ENCODE measurements at regions of chr11 and their contacts with region 1.

Region 1: GRCh38 chr11:26519469-26519868 is 52.6 kb downstream of the MUC15 start:
- DNase-seq: no peak
- ATAC-seq: no peak
- H3K4me3 Mint-ChIP-seq: no peak overlapping the region
- H3K27ac Mint-ChIP-seq: no peak overlapping the region
- H3K4me1 Mint-ChIP-seq: no peaks in the 10 kb centered on the region
- H3K27me3 Mint-ChIP-seq: no peaks in the 10 kb centered on the region

Region 2: DNA sequence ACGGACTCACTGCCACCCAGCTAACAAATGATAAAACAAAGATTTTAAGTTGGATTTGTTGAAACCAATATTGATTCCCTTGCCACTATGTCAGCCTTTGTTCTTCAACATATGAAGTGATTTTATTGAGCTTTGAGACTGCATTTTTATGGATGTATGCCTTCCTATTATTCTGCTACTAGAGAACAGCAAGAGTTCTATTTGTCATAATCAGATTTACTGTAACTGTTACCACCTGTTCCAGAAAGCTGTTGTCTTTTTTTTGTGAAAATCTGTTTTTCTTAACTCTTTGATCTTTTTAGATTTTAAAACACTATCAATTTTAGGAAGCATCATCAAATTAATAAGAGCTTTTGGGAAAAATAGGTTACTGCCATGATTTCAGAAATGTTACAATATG is 61.8 kb before region 1 on chr11:
- CTCF ChIA-PET with region 1: no interaction called
- POLR2A ChIA-PET with region 1: no interaction called
- intact Hi-C with region 1: no loop called
- DNase-seq: no peak
- ATAC-seq: no peak
- H3K4me3 Mint-ChIP-seq: no peak overlapping the region
- H3K27ac Mint-ChIP-seq: no peak overlapping the region
- H3K4me1 Mint-ChIP-seq: no peaks in the 10 kb centered on the region
- H3K27me3 Mint-ChIP-seq: no peaks in the 10 kb centered on the region

Region 3: GRCh38 chr11:26493616-26494015 is 25.9 kb before region 1 on chr11:
- CTCF ChIA-PET with region 1: no interaction called
- POLR2A ChIA-PET with region 1: no interaction called
- intact Hi-C with region 1: no loop called
- DNase-seq: no peak
- ATAC-seq: no peak
- H3K4me3 Mint-ChIP-seq: no peak overlapping the region
- H3K27ac Mint-ChIP-seq: no peak overlapping the region
- H3K4me1 Mint-ChIP-seq: no peaks in the 10 kb centered on the region
- H3K27me3 Mint-ChIP-seq: no peaks in the 10 kb centered on the region

Region 4: GRCh38 chr11:26537341-26537740 is 17.9 kb after region 1 on chr11:
- CTCF ChIA-PET with region 1: interaction called, 4 read pairs
- POLR2A ChIA-PET with region 1: no interaction called
- intact Hi-C with region 1: loop called in 1 of 2 experiments (anchors 1 kb)
- DNase-seq: no peak
- ATAC-seq: no peak
- H3K4me3 Mint-ChIP-seq: no peak overlapping the region
- H3K27ac Mint-ChIP-seq: no peak overlapping the region
- H3K4me1 Mint-ChIP-seq: no peaks in the 10 kb centered on the region
- H3K27me3 Mint-ChIP-seq: no peaks in the 10 kb centered on the region

Region 5: GRCh38 chr11:26608507-26609146 is 89.2 kb after region 1 on chr11:
- CTCF ChIA-PET with region 1: no interaction called
- POLR2A ChIA-PET with region 1: no interaction called
- intact Hi-C with region 1: no loop called
- DNase-seq: no peak
- ATAC-seq: no peak
- H3K4me3 Mint-ChIP-seq: no peak overlapping the region
- H3K27ac Mint-ChIP-seq: no peak overlapping the region
- H3K4me1 Mint-ChIP-seq: no peaks in the 10 kb centered on the region
- H3K27me3 Mint-ChIP-seq: no peaks in the 10 kb centered on the region

Region 6: DNA sequence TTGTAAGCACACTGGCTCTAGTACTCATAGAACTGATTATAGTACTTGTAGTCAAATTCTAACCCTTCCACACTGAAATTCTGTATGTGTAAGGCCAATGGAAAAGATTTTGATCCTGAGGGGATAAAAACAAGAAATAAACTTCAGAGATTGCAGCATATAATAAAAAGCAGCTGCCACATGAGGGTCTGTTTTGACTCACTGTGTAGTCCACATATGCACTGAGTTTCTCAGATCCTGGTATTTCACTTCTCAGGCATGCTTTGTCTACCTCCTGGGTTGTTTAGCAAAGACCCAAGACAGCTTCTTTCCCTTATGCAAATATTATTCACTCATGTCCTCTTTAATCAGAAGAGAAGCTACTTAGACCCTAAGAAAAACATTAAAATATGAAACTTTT is 273.5 kb after region 1 on chr11:
- CTCF ChIA-PET with region 1: no interaction called
- POLR2A ChIA-PET with region 1: no interaction called
- intact Hi-C with region 1: no loop called
- DNase-seq: no peak
- ATAC-seq: no peak
- H3K4me3 Mint-ChIP-seq: no peak overlapping the region
- H3K27ac Mint-ChIP-seq: no peak overlapping the region
- H3K4me1 Mint-ChIP-seq: no peaks in the 10 kb centered on the region
- H3K27me3 Mint-ChIP-seq: no peaks in the 10 kb centered on the region